GM13976 (cell line): ENCODE measurements at regions of chr14 and their contacts with region 1.

Region 1: GRCh38 chr14:61438860-61439684 is 117.7 kb downstream of the PRKCH start:
- DNase-seq: peak; percentile 52
- CTCF ChIP-seq: no peak

Region 2: GRCh38 chr14:61321385-61322010 is 117.6 kb before region 1 on chr14 and contains the start of gene PRKCH:
- in situ Hi-C with region 1: loop called (anchors 10 kb)
- DNase-seq: peak; percentile 89
- CTCF ChIP-seq: peak; percentile 28